ENCODE measurements at regions of chr14 and their contacts with region 1.

Region 1: DNA sequence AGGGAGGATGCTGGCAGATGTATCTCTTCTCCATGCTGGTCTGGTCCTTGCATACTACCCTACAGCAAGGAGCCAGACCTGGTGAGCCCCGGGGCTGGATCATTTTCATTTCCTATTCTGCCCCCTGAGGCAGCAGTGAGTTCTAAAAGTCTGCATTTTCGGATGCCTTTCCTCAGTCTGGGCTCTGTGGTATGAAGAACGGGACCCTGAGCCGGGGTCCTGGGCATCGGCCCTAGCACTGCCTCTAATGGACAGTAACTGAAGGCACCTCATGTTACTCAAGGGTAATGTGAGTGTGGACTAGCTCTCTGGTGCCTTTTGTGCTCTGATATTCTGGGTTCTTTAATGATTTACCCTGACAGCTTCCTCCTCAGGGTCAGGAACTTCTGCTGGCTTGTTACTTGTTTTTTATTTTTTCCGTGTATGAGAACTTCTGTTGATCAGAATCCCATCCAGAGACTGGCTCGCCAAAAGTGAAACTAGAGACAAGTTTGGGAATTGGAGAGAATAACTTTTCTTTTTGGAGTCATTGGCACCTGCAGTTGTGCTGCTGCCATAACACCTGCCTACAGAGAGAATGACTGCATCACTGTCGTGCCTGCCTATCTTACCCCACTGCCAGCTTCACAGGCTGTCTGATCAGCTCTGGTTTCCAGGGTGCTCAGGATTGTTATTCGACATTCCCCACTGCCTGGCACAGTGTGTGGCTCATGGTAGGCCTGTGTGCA is 62.3 kb downstream of the SUSD6 start:
- DNase-seq: peak; percentile 37
- H3K4me3 Mint-ChIP-seq: peak overlapping the region; percentile 49
- H3K27ac Mint-ChIP-seq: peak overlapping the region; percentile 99
- H3K4me1 Mint-ChIP-seq: peaks cover 94% of the 10 kb centered on the region
- H3K27me3 Mint-ChIP-seq: no peaks in the 10 kb centered on the region

Region 2: DNA sequence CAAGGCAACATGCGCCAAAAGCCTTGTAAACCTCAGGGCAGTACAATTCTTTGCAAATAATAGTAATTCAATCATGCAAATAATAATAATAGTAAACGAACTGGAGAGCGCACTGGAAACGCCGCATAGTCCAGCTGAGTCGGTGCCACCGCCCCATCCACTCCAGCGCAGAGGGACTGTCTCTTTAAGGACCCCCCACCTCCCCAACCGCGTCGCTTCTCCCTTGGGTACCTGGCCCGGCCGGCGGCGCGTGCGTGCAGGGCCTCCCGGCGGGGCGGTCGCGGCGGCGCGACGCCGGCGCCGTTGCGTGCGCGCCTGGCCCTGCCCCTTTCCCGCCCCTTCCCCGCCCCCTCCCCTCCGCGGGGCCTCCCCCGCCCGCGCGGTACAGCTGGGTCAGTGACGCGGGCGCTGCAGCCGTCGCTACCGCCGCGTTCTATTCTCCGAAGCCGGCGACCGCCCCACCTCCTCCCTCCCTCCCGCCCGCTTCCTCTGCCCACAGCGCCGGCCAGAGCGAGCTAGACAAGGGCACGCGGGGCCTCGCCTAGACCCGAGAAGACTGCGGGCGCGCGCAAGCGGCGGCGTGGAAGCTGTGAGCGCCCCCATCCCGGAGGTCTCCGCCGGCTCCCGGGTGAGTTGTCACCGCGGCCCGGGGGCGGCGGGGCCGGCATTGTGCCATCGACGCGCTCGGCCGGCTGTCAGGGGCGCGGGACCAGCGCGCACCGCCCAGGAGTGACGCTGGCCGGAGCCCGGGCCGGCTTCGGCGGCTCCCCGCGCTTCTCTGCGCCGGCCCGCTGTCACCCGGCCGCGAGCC is 62.3 kb before region 1 on chr14 and contains the start of gene SUSD6:
- CTCF ChIA-PET with region 1: interaction called, 7 read pairs
- intact Hi-C with region 1: loop called (anchors 1 kb)
- DNase-seq: peak; percentile 88
- H3K4me3 Mint-ChIP-seq: peak within 1 kb of the TSS; percentile 92
- H3K27ac Mint-ChIP-seq: peak within 1 kb of the TSS; percentile 91
- H3K4me1 Mint-ChIP-seq: peaks cover 53% of the 10 kb centered on the region
- H3K27me3 Mint-ChIP-seq: no peaks in the 10 kb centered on the region
- total RNA-seq, gene SUSD6: 66.6 to 69.7 TPM

Region 3: GRCh38 chr14:69643443-69644164 is 30.1 kb before region 1 on chr14:
- CTCF ChIA-PET with region 1: interaction called, 7 read pairs
- intact Hi-C with region 1: loop called (anchors 1 kb)
- DNase-seq: peak; percentile 92
- H3K4me3 Mint-ChIP-seq: no peak overlapping the region
- H3K27ac Mint-ChIP-seq: peak overlapping the region; percentile 90
- H3K4me1 Mint-ChIP-seq: peaks cover 83% of the 10 kb centered on the region
- H3K27me3 Mint-ChIP-seq: no peaks in the 10 kb centered on the region

Region 4: GRCh38 chr14:69685716-69686115 is 12.0 kb after region 1 on chr14:
- CTCF ChIA-PET with region 1: interaction called, 8 read pairs
- intact Hi-C with region 1: loop called (anchors 1 kb)
- DNase-seq: peak; percentile 75
- H3K4me3 Mint-ChIP-seq: peak overlapping the region; percentile 41
- H3K27ac Mint-ChIP-seq: peak overlapping the region; percentile 93
- H3K4me1 Mint-ChIP-seq: peaks cover 78% of the 10 kb centered on the region
- H3K27me3 Mint-ChIP-seq: no peaks in the 10 kb centered on the region

Region 5: DNA sequence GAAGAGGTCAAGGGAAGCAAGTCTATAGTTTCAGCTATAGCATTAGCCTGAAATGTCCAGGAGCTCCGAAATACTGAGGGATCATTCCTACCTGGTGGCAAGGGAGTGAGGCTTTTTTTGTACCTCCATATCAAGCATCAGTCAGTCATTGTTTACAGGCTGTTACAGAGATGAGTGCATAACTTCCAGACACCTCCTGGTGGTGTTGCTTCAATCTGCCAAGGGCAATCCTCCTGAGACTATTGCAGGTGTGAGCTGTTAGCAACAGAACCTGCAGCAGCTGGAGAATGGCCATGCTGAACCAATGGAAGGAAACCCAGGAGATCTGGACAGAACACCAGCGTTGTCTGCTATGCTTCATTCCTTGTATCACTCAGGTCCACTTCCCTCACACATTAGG is 595.0 kb after region 1 on chr14:
- CTCF ChIA-PET with region 1: no interaction called
- intact Hi-C with region 1: no loop called
- DNase-seq: no peak
- H3K4me3 Mint-ChIP-seq: no peak overlapping the region
- H3K27ac Mint-ChIP-seq: no peak overlapping the region
- H3K4me1 Mint-ChIP-seq: no peaks in the 10 kb centered on the region
- H3K27me3 Mint-ChIP-seq: peaks cover 6% of the 10 kb centered on the region

Region 6: GRCh38 chr14:70655110-70655826 is 981.5 kb after region 1 on chr14:
- CTCF ChIA-PET with region 1: no interaction called
- intact Hi-C with region 1: loop called (anchors 5 kb)
- DNase-seq: peak; percentile 92
- H3K4me3 Mint-ChIP-seq: peak overlapping the region; percentile 83
- H3K27ac Mint-ChIP-seq: peak overlapping the region; percentile 98
- H3K4me1 Mint-ChIP-seq: peaks cover 81% of the 10 kb centered on the region
- H3K27me3 Mint-ChIP-seq: no peaks in the 10 kb centered on the region

Measured in activated naive CD4-positive, alpha-beta T cell treated with anti-CD3 and anti-CD28 coated beads for 36 hours (primary cell).